ENCODE measurements at regions of chr5 and their contacts with region 1.

Region 1: DNA sequence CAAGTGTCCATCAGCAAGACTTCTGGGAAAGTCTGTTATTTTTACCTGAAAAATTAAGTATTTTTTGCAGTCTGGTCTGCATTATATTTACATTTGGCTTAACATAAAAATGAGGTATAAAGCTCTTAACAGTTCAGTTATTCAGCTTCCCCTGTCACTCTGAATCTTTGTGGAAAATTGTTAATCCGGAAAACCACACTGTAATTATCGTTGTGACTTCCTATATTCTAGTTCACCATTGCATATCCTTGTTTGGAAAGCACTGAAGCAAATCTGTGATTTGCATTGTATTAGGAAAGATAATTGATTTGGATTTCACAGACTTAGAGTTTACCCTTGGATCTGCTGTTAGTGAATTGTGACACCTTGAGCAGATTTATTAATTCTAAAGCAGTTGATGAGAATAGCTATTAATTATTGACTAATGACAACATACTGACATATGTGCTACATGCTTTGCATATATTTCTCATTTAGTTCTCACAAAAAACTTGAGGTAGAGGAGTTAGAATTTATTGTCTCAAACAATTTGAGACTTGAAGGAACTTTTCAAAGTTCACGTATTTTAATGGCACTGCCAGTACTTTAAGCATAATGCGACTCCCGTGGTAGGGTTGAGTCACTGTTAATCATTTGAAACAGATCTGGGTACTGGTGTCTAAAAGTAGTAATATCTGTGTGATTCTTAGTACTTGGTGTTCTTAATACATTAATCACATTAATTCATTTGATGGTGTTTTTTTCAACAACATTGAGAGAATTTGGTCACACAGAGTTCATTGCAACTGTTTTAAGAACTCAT is 71.8 kb upstream of the LRRC70 start:
- DNase-seq: no peak
- ATAC-seq: no peak
- H3K4me3 ChIP-seq: no peak overlapping the region
- H3K27ac ChIP-seq: no peak overlapping the region
- H3K4me1 ChIP-seq: no peaks in the 10 kb centered on the region
- H3K27me3 ChIP-seq: no peaks in the 10 kb centered on the region
- CTCF ChIP-seq: no peak

Region 2: GRCh38 chr5:62268234-62268633 is 238.6 kb before region 1 on chr5:
- CTCF ChIA-PET with region 1: no interaction called
- POLR2A ChIA-PET with region 1: no interaction called
- in situ Hi-C with region 1: no loop called
- intact Hi-C with region 1: no loop called
- DNase-seq: no peak
- ATAC-seq: no peak
- H3K4me3 ChIP-seq: no peak overlapping the region
- H3K27ac ChIP-seq: no peak overlapping the region
- H3K4me1 ChIP-seq: no peaks in the 10 kb centered on the region
- H3K27me3 ChIP-seq: peaks cover 8% of the 10 kb centered on the region
- CTCF ChIP-seq: no peak

Region 3: DNA sequence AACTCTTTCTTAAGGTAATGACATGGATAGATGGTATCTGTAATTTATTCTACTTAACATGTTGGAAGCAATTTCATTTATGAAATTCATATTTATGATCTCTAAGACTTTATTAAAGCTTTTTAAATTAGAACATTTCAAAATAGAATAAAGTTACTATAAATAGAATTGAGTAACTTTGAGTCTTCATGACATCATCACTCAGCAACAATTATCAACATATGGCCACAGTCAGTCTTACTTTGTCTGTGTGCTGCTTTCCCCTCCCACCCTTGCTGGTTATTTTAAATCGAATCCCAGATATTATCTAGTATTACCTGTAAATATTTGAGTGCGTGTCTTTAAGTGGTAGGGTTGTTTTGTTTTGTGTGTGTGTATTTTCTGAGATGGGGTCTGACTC is 29.1 kb before region 1 on chr5:
- CTCF ChIA-PET with region 1: no interaction called
- POLR2A ChIA-PET with region 1: interaction called, 12 read pairs
- in situ Hi-C with region 1: no loop called
- intact Hi-C with region 1: no loop called
- DNase-seq: no peak
- ATAC-seq: no peak
- H3K4me3 ChIP-seq: no peak overlapping the region
- H3K27ac ChIP-seq: no peak overlapping the region
- H3K4me1 ChIP-seq: no peaks in the 10 kb centered on the region
- H3K27me3 ChIP-seq: no peaks in the 10 kb centered on the region
- CTCF ChIP-seq: no peak

Region 4: DNA sequence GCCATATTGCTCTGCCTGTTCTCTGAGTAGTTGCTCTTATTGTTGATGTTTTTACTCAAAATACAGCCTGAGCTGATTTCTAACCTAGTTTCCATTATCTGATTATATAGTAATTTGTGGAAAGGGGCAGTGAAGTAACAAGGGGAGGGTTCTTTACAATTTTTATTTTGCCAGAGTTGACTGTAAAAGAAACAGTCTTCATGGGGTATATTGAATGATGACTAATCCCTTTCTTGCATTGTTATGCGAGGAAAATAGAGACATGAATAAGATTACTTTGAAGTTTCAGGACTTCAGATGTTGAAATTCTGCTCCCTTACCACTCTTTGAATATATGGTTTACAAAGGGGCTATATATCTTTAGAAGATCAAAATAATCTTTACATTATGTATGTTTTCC is 62.6 kb after region 1 on chr5:
- CTCF ChIA-PET with region 1: no interaction called
- POLR2A ChIA-PET with region 1: no interaction called
- in situ Hi-C with region 1: no loop called
- intact Hi-C with region 1: no loop called
- DNase-seq: no peak
- ATAC-seq: no peak
- H3K4me3 ChIP-seq: no peak overlapping the region
- H3K27ac ChIP-seq: no peak overlapping the region
- H3K4me1 ChIP-seq: no peaks in the 10 kb centered on the region
- H3K27me3 ChIP-seq: no peaks in the 10 kb centered on the region
- CTCF ChIP-seq: no peak

Region 5: GRCh38 chr5:62606878-62607277 is 100.0 kb after region 1 on chr5:
- CTCF ChIA-PET with region 1: no interaction called
- POLR2A ChIA-PET with region 1: no interaction called
- in situ Hi-C with region 1: no loop called
- intact Hi-C with region 1: no loop called
- DNase-seq: no peak
- ATAC-seq: no peak
- H3K4me3 ChIP-seq: no peak overlapping the region
- H3K27ac ChIP-seq: no peak overlapping the region
- H3K4me1 ChIP-seq: no peaks in the 10 kb centered on the region
- H3K27me3 ChIP-seq: no peaks in the 10 kb centered on the region
- CTCF ChIP-seq: no peak

Measured in Panc1 (cell line).